Endothelial cell of umbilical vein (primary cell): ENCODE measurements at regions of chr17 and their contacts with region 1.

Region 1: GRCh38 chr17:56185905-56186783 is 32.9 kb downstream of the ANKFN1 start:
- DNase-seq: peak; percentile 84
- H3K4me3 ChIP-seq: no peak overlapping the region
- H3K27ac ChIP-seq: peak overlapping the region; percentile 73
- H3K4me1 ChIP-seq: peaks cover 12% of the 10 kb centered on the region
- H3K27me3 ChIP-seq: no peaks in the 10 kb centered on the region
- CTCF ChIP-seq: no peak
- POLR2A ChIP-seq: no peak

Region 2: GRCh38 chr17:56292010-56292409 is 105.9 kb after region 1 on chr17:
- CTCF ChIA-PET with region 1: no interaction called
- POLR2A ChIA-PET with region 1: no interaction called
- dilution Hi-C with region 1: no loop called
- intact Hi-C with region 1: loop called (anchors 1 kb)
- DNase-seq: peak; percentile 84
- H3K4me3 ChIP-seq: no peak overlapping the region
- H3K27ac ChIP-seq: peak overlapping the region; percentile 69
- H3K4me1 ChIP-seq: peaks cover 25% of the 10 kb centered on the region
- H3K27me3 ChIP-seq: no peaks in the 10 kb centered on the region
- CTCF ChIP-seq: no peak
- POLR2A ChIP-seq: no peak

Region 3: GRCh38 chr17:56325313-56326000 is 139.3 kb after region 1 on chr17:
- CTCF ChIA-PET with region 1: no interaction called
- POLR2A ChIA-PET with region 1: no interaction called
- dilution Hi-C with region 1: no loop called
- intact Hi-C with region 1: no loop called
- DNase-seq: no peak
- H3K4me3 ChIP-seq: no peak overlapping the region
- H3K27ac ChIP-seq: no peak overlapping the region
- H3K4me1 ChIP-seq: no peaks in the 10 kb centered on the region
- H3K27me3 ChIP-seq: peaks cover 24 to 27% of the 10 kb centered on the region in 2 experiments
- CTCF ChIP-seq: no peak
- POLR2A ChIP-seq: no peak

Region 4: DNA sequence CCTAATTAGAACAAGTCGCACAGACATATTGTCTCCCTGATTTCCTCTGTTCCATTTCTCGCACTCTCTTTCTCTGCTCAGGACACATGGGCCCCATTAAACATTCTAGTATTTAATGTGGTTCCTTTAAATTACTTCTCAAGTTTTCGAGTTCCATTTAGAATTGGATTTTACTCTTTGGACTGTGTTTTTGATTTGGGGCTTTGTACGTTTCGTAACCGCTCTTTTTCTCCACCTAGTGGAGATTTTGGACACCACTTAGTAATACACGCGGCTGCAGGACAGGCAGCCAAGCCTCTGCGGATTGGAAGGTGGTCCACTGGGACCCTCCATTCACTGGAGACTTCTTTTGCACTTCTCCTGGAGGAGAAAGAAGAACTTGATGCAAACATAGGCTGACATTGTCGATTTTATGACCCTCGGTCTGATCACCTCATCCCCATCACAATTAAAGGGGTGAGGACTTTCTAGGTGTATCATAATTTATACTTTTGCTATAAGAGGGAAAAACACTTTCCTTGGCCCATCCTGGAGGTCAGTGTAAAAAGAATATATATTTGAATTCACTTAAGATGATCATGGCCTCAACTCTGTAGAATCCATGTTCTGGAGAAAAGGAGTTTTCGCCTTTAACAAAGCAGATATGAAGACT is 493.1 kb after region 1 on chr17:
- CTCF ChIA-PET with region 1: no interaction called
- POLR2A ChIA-PET with region 1: no interaction called
- dilution Hi-C with region 1: no loop called
- intact Hi-C with region 1: loop called (anchors 1 kb)
- DNase-seq: peak; percentile 54
- H3K4me3 ChIP-seq: peak overlapping the region; percentile 19 to 58 (median 21)
- H3K27ac ChIP-seq: no peak overlapping the region
- H3K4me1 ChIP-seq: peaks cover 32% of the 10 kb centered on the region
- H3K27me3 ChIP-seq: peaks cover 27 to 38% of the 10 kb centered on the region in 2 experiments
- CTCF ChIP-seq: peak; percentile 60 to 61
- POLR2A ChIP-seq: no peak

Region 5: DNA sequence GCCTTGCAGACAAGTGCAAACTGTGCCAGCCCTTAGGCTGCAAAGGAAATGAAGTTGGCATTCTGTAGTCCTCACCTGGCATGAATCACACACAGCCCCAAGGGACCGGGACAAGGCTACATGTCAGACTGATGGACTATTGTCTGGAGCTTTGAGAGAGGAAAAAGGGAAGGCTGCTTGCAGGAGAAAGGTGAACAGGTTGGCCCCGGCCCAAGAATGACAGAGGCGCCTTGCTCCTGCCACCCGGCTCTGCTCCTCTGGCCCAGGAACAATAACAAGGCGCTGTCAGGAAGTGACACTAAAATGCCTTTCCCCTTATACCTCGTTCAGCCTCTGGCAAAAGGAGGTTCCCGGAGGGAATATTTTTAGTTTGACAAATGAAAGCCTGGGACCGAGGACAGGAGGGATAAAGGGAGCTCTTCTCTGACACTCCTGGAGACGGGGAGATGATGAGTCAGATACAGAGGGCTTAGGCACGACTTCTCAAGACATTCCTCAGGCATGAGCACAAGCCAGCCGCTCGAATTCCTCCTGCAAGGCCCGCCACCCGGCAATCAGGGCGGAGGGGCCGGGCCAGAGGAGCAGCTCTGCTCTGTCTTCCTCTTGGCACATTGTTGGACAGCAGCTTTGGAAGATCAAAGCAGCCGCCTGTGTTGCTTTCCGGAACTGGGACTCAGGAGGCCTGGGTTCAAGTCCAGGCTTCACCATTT is 513.2 kb after region 1 on chr17:
- CTCF ChIA-PET with region 1: no interaction called
- POLR2A ChIA-PET with region 1: no interaction called
- dilution Hi-C with region 1: no loop called
- intact Hi-C with region 1: loop called (anchors 5 kb)
- DNase-seq: peak; percentile 56
- H3K4me3 ChIP-seq: no peak overlapping the region
- H3K27ac ChIP-seq: peak overlapping the region; percentile 88
- H3K4me1 ChIP-seq: peaks cover 18% of the 10 kb centered on the region
- H3K27me3 ChIP-seq: no peaks in the 10 kb centered on the region
- CTCF ChIP-seq: no peak
- POLR2A ChIP-seq: peak; percentile 42

Region 6: DNA sequence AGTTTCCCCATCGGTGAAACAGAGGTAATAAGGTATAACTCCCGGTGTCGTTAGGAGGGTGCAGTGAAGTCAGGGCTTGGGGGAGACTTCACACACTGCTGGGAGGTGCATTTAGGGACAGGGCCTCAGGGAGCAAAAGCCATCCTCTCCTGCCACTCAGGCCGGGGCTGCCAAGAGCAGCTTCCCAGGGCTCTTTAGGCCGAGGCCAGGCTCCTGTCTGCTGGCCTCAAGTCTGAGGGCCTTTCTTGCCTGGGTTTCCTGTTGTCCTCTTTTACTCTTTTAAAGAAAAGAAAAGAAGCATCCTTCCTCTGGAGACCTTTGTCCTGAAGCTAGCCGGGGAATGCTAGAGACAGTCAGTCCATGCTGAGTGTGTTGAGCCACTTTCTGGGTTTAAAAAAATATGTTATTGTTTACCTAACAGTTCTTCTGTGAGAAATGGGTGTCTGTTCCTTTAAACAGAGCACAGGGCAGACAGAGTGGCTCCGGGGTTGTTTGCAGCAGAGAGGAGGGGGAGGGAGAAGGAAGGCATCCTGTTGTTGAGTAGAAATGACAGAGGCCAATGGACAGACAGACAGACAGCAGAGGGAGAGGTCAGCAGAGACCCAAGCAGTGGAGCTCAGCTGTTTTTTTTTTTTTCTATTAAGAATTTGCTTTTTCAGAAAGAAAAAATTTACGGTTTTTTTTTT is 568.5 kb after region 1 on chr17:
- CTCF ChIA-PET with region 1: no interaction called
- POLR2A ChIA-PET with region 1: no interaction called
- dilution Hi-C with region 1: no loop called
- intact Hi-C with region 1: loop called (anchors 10 kb)
- DNase-seq: peak; percentile 53
- H3K4me3 ChIP-seq: no peak overlapping the region
- H3K27ac ChIP-seq: peak overlapping the region; percentile 86
- H3K4me1 ChIP-seq: peaks cover 47% of the 10 kb centered on the region
- H3K27me3 ChIP-seq: no peaks in the 10 kb centered on the region
- CTCF ChIP-seq: no peak
- POLR2A ChIP-seq: no peak